ENCODE measurements at regions of chr6 and their contacts with region 1.

Region 1: GRCh38 chr6:70686548-70687133 is 19.0 kb downstream of the SMAP1 start:
- H3K4me3 Mint-ChIP-seq: no peak overlapping the region
- H3K27ac Mint-ChIP-seq: no peak overlapping the region
- H3K4me1 Mint-ChIP-seq: peaks cover 22% of the 10 kb centered on the region
- H3K27me3 Mint-ChIP-seq: no peaks in the 10 kb centered on the region

Region 2: DNA sequence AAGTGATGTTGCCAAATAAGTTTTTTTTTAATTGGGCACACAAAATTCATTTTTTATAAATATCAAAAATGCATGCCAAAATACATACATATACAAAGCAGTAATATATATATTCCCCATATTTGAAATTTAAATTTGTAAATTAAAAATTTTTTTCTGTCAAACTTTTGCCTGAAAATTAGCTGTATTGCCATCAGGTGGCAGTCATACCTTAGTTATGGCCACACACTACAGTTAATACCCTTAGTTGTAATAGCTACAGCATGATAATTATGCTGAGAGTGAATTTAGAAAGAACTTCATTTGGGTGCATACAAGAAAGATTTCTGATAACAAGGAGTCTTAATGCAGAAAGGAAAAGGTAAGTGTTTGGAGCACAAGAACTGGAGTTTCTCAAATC is 166.1 kb before region 1 on chr6:
- intact Hi-C with region 1: loop called (anchors 1 kb)
- H3K4me3 Mint-ChIP-seq: no peak overlapping the region
- H3K27ac Mint-ChIP-seq: no peak overlapping the region
- H3K4me1 Mint-ChIP-seq: no peaks in the 10 kb centered on the region
- H3K27me3 Mint-ChIP-seq: no peaks in the 10 kb centered on the region